Activated CD8-positive, alpha-beta memory T cell treated with anti-CD3 and anti-CD28 coated beads, Interleukin-2, amount 10 ng/mL, durations not matched to agents 7 days and 5 days (primary cell): ENCODE measurements at regions of chr18 and their contacts with region 1.

Region 1: GRCh38 chr18:57561728-57562423 is 24.6 kb downstream of the FECH start:
- DNase-seq: no peak
- ATAC-seq: peak; percentile 63
- H3K4me3 Mint-ChIP-seq: no peak overlapping the region
- H3K27ac Mint-ChIP-seq: no peak overlapping the region
- H3K4me1 Mint-ChIP-seq: no peaks in the 10 kb centered on the region
- H3K27me3 Mint-ChIP-seq: no peaks in the 10 kb centered on the region

Region 2: GRCh38 chr18:57480724-57481123 is 81.2 kb before region 1 on chr18:
- CTCF ChIA-PET with region 1: no interaction called
- DNase-seq: no peak
- ATAC-seq: no peak
- H3K4me3 Mint-ChIP-seq: no peak overlapping the region
- H3K27ac Mint-ChIP-seq: no peak overlapping the region
- H3K4me1 Mint-ChIP-seq: no peaks in the 10 kb centered on the region
- H3K27me3 Mint-ChIP-seq: peaks cover 26% of the 10 kb centered on the region

Region 3: DNA sequence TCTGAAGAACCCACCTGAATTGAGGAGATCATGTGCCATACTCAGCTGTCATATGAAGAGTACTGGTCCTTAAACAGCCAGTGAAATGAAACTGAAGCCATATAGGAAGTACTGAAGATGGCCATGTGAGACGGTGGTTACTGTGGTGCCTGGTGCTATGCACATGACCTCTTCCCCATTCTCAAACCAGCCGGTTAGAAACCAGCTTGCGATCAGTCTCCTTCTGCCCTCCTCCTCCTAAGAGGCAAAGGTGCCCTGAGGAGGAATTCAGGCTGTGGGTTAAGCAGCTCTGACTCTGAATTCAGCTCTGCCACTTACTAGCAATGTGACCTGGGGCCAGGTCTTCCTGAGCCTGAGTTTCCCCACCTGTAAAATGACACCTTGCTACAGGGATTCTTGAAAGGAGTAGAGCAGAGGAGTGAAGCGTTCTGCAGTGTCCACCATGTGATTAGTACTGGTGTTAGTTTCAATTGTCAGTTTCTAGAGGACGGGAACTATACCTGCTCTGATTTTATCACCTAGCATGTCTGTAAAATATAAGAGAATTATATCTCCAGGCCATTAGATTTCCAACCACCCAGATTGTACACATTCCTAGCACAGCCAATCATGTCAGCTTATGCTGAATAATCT is 19.5 kb after region 1 on chr18:
- CTCF ChIA-PET with region 1: interaction called, 10 read pairs
- DNase-seq: peak; percentile 74
- ATAC-seq: peak; percentile 89
- H3K4me3 Mint-ChIP-seq: no peak overlapping the region
- H3K27ac Mint-ChIP-seq: peak overlapping the region; percentile 64
- H3K4me1 Mint-ChIP-seq: peaks cover 38% of the 10 kb centered on the region
- H3K27me3 Mint-ChIP-seq: no peaks in the 10 kb centered on the region

Region 4: GRCh38 chr18:57705826-57706554 is 144.1 kb after region 1 on chr18:
- CTCF ChIA-PET with region 1: no interaction called
- DNase-seq: no peak
- ATAC-seq: no peak
- H3K4me3 Mint-ChIP-seq: no peak overlapping the region
- H3K27ac Mint-ChIP-seq: no peak overlapping the region
- H3K4me1 Mint-ChIP-seq: no peaks in the 10 kb centered on the region
- H3K27me3 Mint-ChIP-seq: no peaks in the 10 kb centered on the region